Heart right ventricle (tissue), 16 donors: ENCODE measurements at regions of chr17 and their contacts with region 1.

Region 1: GRCh38 chr17:36066365-36066985 is 2.4 kb downstream of the CCL18 start:
- DNase-seq: no peak
- ATAC-seq: peak in 4 of 8 donors; percentile 16 to 58 (median 38)
- H3K4me3 ChIP-seq: no peak overlapping the region
- H3K27ac ChIP-seq: peak overlapping the region in 1 of 10 donors; percentile 74
- H3K4me1 ChIP-seq: peaks cover 0 to 4% (median 0%) of the 10 kb centered on the region in 9 donors
- H3K27me3 ChIP-seq: peaks cover 0 to 3% (median 0%) of the 10 kb centered on the region in 7 donors
- CTCF ChIP-seq: no peak

Region 2: DNA sequence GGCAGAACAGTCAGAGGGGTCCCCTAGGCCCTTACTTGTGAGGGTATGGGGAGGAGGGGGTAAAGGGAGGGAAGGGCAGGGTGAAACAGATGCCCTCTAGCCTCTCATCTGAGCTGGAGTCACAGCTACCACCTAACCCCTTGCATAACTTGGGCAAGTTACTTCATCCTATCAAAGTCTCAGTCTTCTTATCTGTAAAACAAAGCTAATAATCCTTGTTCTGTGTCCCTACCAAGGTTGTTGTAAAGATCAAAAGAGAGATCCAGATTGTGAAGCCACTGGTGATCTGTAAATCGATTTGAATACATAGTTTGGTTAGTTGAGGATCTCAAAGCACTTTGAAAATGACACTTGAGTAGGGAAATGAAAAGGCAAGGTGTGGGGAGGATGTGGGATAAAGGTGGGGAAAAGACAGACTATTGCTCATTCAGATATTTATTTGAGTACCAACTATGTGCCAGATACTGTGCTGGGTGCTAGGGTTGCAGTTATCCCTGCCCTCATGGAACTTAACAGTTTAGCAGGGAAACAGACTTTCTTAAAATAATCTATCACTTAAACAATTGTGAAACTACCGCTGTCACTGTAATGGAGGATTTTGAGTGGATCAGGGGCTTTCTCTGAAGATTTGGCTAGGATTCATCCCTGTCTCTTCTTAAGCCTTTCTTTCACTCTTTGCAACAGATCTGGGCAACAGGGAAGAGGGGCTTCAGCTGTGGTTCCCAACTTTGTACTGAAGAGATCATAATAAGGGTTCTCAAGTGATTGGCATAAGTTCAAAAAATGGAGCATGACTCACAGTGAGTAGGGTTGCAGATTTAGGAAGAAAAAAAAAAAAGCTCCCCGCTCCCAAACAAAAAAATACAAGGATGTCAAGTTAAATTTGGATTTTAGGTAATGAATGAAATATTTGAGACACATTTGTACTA is 200.8 kb before region 1 on chr17:
- intact Hi-C with region 1: no loop called
- DNase-seq: no peak
- ATAC-seq: no peak
- H3K4me3 ChIP-seq: no peak overlapping the region
- H3K27ac ChIP-seq: peak overlapping the region in 1 of 10 donors; percentile 14
- H3K4me1 ChIP-seq: peaks cover 0 to 14% (median 9%) of the 10 kb centered on the region in 9 donors
- H3K27me3 ChIP-seq: no peaks in the 10 kb centered on the region
- CTCF ChIP-seq: no peak

Region 3: DNA sequence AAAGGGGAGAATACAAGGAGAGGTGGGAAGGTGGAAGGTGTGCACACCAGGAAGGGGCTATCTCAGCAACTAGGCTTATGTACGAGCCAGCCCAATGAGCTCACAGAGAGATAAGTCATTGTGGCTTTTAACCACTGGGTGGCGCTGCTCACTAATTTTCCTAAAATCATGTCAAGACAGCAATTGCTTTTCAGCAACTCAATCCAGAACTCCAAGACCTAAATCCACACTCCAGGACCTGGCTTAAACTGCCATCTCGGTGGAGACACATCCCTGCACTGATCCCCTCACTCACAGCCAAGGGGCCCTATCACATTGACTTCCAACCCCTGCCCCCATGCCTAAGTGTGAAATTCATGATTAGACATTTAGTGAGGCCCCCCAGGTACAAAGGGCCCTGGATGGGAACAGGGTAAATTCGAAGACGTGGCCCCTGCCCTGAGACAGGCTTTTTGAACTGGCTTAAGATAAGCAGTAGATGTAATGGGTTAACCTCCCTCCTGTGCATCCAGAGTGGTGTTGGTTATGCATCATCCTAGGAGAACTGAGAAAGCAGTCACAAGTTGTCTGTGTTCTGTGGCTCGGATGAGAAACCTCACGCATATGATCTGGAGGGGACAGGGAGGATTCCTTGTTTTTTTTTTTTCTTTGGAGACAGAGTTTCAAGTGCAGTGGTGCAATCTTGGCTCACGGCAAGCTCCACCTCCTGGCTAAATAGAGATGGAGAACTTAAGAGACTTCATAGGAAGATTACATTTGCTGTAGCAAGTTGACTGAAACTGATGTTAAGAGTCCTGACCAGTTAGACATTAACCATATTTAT is 96.7 kb before region 1 on chr17:
- intact Hi-C with region 1: loop called in 6 of 10 experiments (anchors 5 to 10 kb)
- DNase-seq: peak; percentile 29 to 79
- ATAC-seq: peak; percentile 59 to 78 (median 74)
- H3K4me3 ChIP-seq: no peak overlapping the region
- H3K27ac ChIP-seq: no peak overlapping the region
- H3K4me1 ChIP-seq: peaks cover 0 to 28% (median 14%) of the 10 kb centered on the region in 9 donors
- H3K27me3 ChIP-seq: no peaks in the 10 kb centered on the region
- CTCF ChIP-seq: peak; percentile 77 to 90 (median 86)

Region 4: DNA sequence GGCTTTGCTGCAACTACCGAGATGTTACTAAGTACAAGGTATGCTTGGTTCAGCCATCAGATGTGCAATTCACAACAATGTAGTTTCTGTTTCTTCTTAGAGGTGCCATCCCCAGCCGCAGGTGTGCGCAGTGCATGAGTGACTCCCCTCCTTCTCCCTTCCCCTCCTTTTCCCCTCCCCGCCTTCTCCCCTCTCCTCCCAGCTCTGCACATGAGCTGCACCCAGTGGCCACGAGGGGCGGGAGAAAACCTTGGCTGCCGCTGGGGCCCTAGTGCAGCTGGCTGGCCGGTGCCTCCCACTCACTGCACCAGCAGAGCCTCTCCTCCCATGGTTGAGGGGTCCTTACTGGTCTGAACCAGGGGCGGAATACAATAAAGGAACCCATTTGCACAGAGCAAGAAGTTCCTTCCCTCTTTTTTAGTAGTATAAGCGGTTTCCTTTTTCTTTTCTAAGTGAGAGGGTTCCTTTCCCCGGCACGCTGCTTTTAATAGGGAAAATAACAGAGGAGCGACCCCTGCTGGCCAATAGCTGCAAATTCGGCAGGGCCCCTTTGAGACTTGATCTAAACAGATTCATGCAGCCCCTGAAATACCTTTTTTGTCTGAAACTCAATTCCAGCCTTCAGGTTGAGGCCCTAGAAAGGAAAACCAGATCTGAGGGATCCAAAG is 57.3 kb before region 1 on chr17:
- intact Hi-C with region 1: loop called in 1 of 10 experiments (anchors 10 kb)
- DNase-seq: no peak
- ATAC-seq: no peak
- H3K4me3 ChIP-seq: no peak overlapping the region
- H3K27ac ChIP-seq: no peak overlapping the region
- H3K4me1 ChIP-seq: no peaks in the 10 kb centered on the region
- H3K27me3 ChIP-seq: peaks cover 0 to 6% (median 0%) of the 10 kb centered on the region in 7 donors
- CTCF ChIP-seq: peak in 5 of 9 donors; percentile 12 to 43 (median 24)

Region 5: DNA sequence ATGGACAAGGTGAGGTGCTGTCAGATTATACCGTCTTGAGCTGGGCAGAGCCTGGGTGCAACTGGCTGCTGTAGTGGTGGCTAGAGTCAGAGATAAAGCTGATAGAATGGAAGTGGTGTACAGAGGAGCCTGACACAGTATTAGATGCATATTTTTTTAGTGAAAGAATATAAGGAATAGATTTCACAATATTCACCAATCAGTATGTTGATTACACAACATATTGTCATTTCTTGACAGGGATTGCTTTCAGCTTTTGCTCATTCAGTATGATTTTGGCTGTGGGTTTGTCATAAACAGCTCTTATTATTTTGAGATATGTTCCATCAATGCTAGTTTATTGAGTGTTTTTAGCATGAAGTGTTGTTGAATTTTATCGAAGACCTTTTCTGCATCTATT is 47.1 kb before region 1 on chr17:
- intact Hi-C with region 1: no loop called
- DNase-seq: no peak
- ATAC-seq: no peak
- H3K4me3 ChIP-seq: no peak overlapping the region
- H3K27ac ChIP-seq: no peak overlapping the region
- H3K4me1 ChIP-seq: peaks cover 0 to 15% (median 0%) of the 10 kb centered on the region in 9 donors
- H3K27me3 ChIP-seq: peaks cover 0 to 9% (median 0%) of the 10 kb centered on the region in 7 donors
- CTCF ChIP-seq: no peak

Region 6: DNA sequence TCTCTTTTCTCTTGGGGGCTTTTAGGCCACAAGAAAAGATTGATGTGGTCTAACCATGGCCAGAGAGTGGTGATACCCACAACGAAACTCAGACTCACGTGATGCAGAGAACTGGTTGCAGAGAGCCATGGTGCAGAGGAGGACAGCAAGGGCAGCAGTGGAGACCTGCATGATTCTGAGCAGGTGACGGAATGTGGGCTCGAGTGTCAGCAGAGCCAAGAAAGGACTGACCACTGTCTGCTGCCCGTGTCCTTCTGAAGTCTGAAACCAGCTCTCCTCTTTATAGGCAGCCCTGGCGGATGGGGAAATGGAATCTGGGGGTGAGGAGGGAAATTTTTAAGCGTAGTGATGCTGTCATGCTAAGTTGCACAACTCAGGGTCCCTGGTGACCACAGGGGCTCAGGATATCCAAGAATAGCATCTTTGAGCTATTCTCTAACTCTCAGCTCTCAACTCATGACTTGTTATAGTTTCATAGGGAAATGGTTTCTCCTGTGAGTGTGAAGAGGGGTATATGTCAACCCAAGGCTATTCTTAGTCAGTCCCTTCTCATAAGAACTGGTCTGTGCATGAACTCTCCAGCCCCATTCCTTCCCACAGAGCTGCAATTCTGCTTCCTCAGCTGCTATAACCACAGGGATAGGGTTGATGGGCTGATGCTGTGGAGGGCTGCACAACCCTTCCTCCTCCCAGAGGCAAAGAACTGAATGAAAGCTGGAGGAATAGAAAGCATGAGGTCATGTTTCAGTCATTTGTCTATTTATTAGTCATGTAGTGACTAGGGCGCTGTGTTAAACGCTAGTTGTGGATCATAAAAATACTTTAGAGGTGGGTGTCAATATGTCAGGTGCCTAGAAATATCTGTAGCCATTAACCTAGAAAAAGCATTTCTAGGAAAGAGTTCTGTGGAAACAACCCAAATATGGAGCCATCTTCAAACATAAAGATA is 23.7 kb after region 1 on chr17 and contains the start of gene CCL3:
- intact Hi-C with region 1: loop called in 1 of 10 experiments (anchors 2 kb)
- DNase-seq: peak in 1 of 2 donors; percentile 32
- ATAC-seq: peak; percentile 57 to 82 (median 74)
- H3K4me3 ChIP-seq: peak within 1 kb of the TSS in 1 of 10 donors; percentile 24
- H3K27ac ChIP-seq: peak within 1 kb of the TSS in 2 of 10 donors; percentile 12 to 65
- H3K4me1 ChIP-seq: peaks cover 0 to 40% (median 0%) of the 10 kb centered on the region in 9 donors
- H3K27me3 ChIP-seq: peaks cover 0 to 19% (median 6%) of the 10 kb centered on the region in 7 donors
- CTCF ChIP-seq: no peak
- total RNA-seq, gene CCL3: 0.24 to 12.3 (median 0.52) TPM in 7 of 10 donors, not detected in the others

Region 7: GRCh38 chr17:36105781-36106492 is 39.5 kb after region 1 on chr17:
- intact Hi-C with region 1: no loop called
- DNase-seq: no peak
- ATAC-seq: no peak
- H3K4me3 ChIP-seq: no peak overlapping the region
- H3K27ac ChIP-seq: peak overlapping the region in 1 of 10 donors; percentile 73
- H3K4me1 ChIP-seq: peaks cover 0 to 45% (median 0%) of the 10 kb centered on the region in 9 donors
- H3K27me3 ChIP-seq: peaks cover 0 to 30% (median 4%) of the 10 kb centered on the region in 7 donors
- CTCF ChIP-seq: no peak